ENCODE measurements at regions of chr4 and their contacts with region 1.

Region 1: GRCh38 chr4:186587416-186588018 is 32.1 kb upstream of the MTNR1A start:
- DNase-seq: no peak
- H3K4me3 ChIP-seq: no peak overlapping the region
- H3K27me3 ChIP-seq: no peaks in the 10 kb centered on the region
- CTCF ChIP-seq: peak; percentile 84

Region 2: GRCh38 chr4:186472948-186473347 is 114.6 kb before region 1 on chr4:
- CTCF ChIA-PET with region 1: interaction called, 10 read pairs
- POLR2A ChIA-PET with region 1: no interaction called
- DNase-seq: peak; percentile 11
- H3K4me3 ChIP-seq: no peak overlapping the region
- H3K27me3 ChIP-seq: no peaks in the 10 kb centered on the region
- CTCF ChIP-seq: peak; percentile 60

Measured in BJ (cell line).